ENCODE measurements at regions of chr18 and their contacts with region 1.

Region 1: DNA sequence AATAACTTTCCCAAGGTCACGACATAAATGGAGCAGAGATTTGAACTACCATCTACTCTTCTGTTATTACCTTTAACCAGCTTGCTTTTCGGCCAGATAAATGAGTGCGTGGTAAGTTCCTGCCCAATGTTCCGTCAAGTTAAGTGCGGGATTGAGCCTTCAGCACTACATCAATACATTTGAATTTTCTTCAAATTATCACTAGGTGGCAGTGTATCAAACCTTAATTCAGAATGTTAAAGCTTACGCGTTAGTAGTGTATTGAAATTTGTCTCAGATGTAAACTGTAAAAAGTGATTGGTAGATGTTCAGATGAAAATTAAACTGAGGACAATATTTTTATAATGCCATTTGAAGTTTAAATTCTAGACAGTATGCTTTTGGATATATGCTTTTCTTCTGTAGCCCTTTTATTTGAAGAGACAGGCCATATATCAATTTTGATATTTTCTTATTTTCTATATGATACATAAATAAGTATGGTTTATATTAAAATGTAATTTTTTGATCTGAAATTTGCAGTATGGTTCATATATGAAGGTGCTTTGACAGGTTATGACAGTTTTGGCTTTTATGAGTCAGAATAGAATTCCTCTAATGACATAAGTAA is 681.3 kb downstream of the ADCYAP1 start:
- DNase-seq: no peak
- ATAC-seq: peak; percentile 62 to 83
- H3K4me3 ChIP-seq: no peak overlapping the region
- H3K27ac ChIP-seq: no peak overlapping the region
- H3K4me1 ChIP-seq: peaks cover 3% of the 10 kb centered on the region
- H3K27me3 ChIP-seq: no peaks in the 10 kb centered on the region
- CTCF ChIP-seq: peak; percentile 47

Region 2: DNA sequence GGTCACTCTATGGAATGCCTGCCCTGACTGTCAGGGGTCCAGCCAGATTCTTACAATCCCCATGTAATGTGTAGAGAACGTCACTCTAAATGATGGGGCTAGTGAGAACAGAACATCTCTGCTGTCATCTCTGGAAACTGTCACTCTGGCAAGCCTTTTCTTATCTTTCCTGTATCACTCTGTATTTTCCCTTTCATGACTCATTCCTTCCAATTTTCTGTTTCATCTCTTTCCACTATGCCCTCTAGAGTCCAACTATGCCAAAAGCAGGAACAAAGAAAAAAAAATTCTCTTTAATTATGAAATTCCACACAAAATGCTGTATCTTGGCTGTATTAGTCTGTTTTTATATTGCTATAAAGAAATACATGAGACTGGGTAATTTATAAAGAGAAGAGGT is 72.5 kb before region 1 on chr18:
- intact Hi-C with region 1: no loop called
- DNase-seq: no peak
- ATAC-seq: no peak
- H3K4me3 ChIP-seq: no peak overlapping the region
- H3K27ac ChIP-seq: no peak overlapping the region
- H3K4me1 ChIP-seq: no peaks in the 10 kb centered on the region
- H3K27me3 ChIP-seq: no peaks in the 10 kb centered on the region
- CTCF ChIP-seq: no peak

Region 3: DNA sequence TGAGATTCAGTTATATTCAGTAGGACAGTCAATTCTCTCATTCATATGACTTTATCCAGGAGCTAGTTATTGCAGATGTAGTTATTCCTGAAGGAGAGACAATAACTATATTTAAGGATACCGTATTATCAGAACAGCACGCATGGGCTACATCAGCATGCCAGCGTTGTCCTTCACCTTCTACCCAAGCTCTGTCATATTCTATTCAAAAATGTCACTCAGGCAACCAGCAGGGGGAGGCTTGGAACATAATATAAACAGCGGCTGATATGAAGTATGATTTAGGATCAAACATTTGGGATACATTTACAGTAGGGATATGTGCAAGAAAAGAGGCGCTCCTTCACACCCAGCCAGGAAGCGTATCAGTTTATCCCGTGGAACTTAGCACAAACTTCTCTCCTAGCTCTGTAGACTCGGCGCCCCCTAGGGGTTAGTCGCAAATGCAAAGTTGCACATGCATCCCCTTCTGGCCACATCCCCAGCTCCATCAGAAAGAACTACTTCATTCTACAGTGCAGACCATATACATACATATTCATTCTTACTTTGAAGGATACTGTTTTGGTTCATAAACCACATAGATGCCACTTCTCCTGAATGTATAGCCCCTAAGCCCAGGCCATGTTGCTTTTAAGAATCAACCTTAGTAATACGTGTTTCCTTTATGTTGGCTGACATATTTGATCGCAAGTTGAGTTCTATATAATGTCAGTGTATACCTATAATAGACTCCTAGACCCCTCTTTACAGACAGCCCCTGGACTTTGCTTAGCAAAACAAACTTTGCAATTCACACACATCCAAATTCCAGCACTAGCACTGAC is 78.1 kb after region 1 on chr18:
- intact Hi-C with region 1: loop called (anchors 10 kb)
- DNase-seq: peak; percentile 85
- ATAC-seq: peak; percentile 79 to 80
- H3K4me3 ChIP-seq: no peak overlapping the region
- H3K27ac ChIP-seq: no peak overlapping the region
- H3K4me1 ChIP-seq: peaks cover 4% of the 10 kb centered on the region
- H3K27me3 ChIP-seq: no peaks in the 10 kb centered on the region
- CTCF ChIP-seq: peak; percentile 74

Measured in lower lobe of right lung (tissue), 2 donors.